GM12878 (cell line): ENCODE measurements at regions of chr2 and their contacts with region 1.

Region 1: DNA sequence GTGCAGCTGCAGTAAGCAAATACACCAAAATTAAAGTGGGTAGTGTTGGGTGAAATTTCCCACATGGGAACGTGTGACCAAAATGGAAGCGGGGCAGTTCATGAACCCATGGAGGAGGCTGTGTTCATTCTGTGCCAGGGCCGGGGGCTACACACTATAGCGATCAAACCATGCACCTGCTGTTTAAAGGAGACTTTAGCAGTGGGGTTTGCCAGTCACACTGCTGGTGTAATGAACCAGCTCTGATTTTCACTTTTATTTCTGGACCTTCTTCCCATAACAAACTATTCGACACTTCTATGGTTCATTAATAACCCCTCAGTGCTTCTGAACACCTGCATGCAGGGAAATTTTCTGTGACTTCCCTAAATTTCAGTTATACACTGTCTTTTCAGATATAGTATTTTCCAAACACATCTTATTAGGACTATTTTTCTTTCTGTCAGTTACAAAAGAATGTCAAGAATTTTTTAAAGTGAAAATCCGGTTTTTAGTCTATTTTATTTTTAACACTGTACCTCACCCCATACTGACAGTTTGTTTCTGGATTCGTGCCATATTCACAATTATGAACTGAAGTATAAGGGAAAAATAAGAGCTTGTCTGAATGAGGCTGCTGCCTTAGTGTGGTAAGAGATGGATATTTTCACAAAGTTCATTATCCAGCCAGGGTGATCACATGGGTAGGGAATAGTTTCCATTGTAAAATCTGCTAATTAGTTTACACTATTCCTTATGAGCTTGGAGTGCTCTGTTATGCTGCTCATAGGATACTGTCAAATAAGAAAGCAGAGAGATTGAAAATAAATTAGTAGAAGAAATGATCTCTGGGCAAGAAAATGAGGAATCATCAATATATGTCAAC is 111.3 kb upstream of the CAVIN2 start:
- DNase-seq: no peak
- ATAC-seq: peak; percentile 60
- H3K4me3 ChIP-seq: no peak overlapping the region
- H3K27ac ChIP-seq: no peak overlapping the region
- H3K4me1 ChIP-seq: no peaks in the 10 kb centered on the region
- H3K27me3 ChIP-seq: no peaks in the 10 kb centered on the region
- CTCF ChIP-seq: no peak
- EP300 ChIP-seq: no peak
- POLR2A ChIP-seq: no peak
- RAD21 ChIP-seq: no peak

Region 2: DNA sequence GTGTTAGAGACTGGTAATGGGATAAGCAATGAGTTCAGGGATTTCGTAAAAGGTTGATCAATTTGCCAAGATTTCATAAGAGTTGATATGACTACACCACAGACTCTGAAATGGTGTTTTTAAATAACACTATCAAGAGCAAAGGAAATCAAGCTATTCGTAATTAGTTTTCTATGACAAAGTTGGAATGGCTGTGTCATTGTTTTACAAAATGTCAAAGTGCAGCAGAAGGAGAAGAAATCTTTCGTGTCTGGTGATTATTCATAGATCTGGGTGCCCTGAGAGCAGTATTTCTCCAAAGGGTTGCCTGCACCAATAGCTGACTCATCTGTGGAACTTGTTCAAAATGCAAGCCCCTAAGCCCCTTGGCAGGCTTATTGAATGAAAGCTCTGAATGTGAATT is 210.2 kb before region 1 on chr2:
- CTCF ChIA-PET with region 1: no interaction called
- POLR2A ChIA-PET with region 1: no interaction called
- RAD21 ChIA-PET with region 1: no interaction called
- SMC1A ChIA-PET with region 1: no interaction called
- in situ Hi-C with region 1: no loop called
- intact Hi-C with region 1: no loop called
- DNase-seq: no peak
- ATAC-seq: peak; percentile 64
- H3K4me3 ChIP-seq: no peak overlapping the region
- H3K27ac ChIP-seq: no peak overlapping the region
- H3K4me1 ChIP-seq: peaks cover 10% of the 10 kb centered on the region
- H3K27me3 ChIP-seq: no peaks in the 10 kb centered on the region
- CTCF ChIP-seq: no peak
- EP300 ChIP-seq: no peak
- POLR2A ChIP-seq: no peak
- RAD21 ChIP-seq: no peak

Region 3: DNA sequence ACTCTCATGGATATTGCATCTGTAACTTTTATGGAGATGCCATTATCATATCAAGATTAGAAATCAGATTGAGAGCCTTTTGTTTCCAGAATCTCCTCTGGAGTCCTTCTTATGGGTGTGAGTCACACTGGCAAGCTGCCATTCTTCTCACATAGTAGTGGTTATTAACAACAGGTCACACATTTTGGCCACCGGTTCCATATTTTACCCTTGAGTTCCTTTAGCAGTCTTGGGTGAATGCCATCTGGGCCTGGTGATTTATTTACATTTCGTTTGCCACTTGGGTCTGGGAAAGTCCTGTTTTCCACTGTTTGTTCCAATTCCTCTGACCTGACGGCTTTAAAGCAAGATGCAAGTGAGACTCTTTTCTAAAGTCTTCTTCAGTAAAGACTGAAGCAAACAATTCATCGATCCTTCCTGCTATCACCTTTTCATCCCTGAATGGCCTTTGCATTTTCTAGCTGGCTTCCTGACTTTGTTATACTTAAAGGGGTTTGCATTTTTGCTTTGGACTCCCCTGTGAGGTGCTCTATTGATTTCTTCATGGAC is 30.8 kb before region 1 on chr2:
- CTCF ChIA-PET with region 1: no interaction called
- POLR2A ChIA-PET with region 1: no interaction called
- RAD21 ChIA-PET with region 1: interaction called, 3 read pairs
- SMC1A ChIA-PET with region 1: interaction called, 15 read pairs
- in situ Hi-C with region 1: no loop called
- intact Hi-C with region 1: no loop called
- DNase-seq: no peak
- ATAC-seq: peak; percentile 23; the same call in 1 of the 3 replicates
- H3K4me3 ChIP-seq: no peak overlapping the region
- H3K27ac ChIP-seq: no peak overlapping the region
- H3K4me1 ChIP-seq: peaks cover 23% of the 10 kb centered on the region
- H3K27me3 ChIP-seq: no peaks in the 10 kb centered on the region
- CTCF ChIP-seq: no peak
- EP300 ChIP-seq: no peak
- POLR2A ChIP-seq: no peak
- RAD21 ChIP-seq: no peak

Region 4: DNA sequence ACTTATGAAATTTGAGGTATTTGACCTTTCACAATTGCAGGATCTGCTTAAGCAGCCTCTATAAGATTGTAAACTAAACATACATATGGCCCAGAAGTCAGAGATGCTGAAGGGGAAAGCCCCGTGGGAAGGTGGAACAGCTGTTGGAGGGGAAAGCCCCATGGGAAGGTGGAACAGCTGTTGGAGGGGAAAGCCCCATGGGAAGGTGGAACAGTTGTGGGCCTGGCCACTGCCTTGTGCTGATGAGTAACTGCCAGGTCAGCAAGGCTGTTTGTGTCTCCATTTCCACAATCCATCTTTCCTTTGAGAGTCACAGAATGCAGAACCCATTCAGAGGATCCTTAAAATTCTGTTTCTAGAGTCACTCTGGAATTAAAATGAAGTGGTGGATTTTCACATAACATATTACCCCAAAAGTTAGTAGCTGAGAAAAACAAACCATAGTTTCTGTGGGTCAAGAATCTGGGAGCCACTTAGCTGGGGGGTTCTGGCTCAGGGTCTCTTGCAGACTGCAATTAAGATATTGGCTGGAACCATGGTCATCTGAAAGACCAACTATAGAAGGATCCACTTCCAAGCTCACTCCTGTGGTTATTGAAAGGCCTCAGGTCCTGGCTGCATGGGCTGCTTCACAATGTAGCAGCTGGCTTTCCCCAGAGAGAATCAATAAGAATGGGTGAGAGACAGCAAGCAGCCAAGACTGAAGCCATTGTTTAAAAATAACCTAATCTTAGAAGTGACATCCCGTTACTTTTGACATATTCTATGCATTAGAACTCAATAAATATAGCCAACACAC is 24.7 kb before region 1 on chr2:
- CTCF ChIA-PET with region 1: interaction called, 4 read pairs
- POLR2A ChIA-PET with region 1: no interaction called
- RAD21 ChIA-PET with region 1: interaction called, 3 read pairs
- SMC1A ChIA-PET with region 1: interaction called, 15 read pairs
- in situ Hi-C with region 1: no loop called
- intact Hi-C with region 1: no loop called
- DNase-seq: peak; percentile 40
- ATAC-seq: peak; percentile 88
- H3K4me3 ChIP-seq: no peak overlapping the region
- H3K27ac ChIP-seq: no peak overlapping the region; the same call in 1 of the 2 replicates
- H3K4me1 ChIP-seq: peaks cover 16% of the 10 kb centered on the region
- H3K27me3 ChIP-seq: no peaks in the 10 kb centered on the region
- CTCF ChIP-seq: no peak
- EP300 ChIP-seq: no peak
- POLR2A ChIP-seq: no peak
- RAD21 ChIP-seq: no peak

Region 5: GRCh38 chr2:192004188-192004963 is 46.1 kb after region 1 on chr2:
- CTCF ChIA-PET with region 1: interaction called, 3 read pairs
- POLR2A ChIA-PET with region 1: no interaction called
- RAD21 ChIA-PET with region 1: interaction called, 4 read pairs
- SMC1A ChIA-PET with region 1: interaction called, 4 read pairs
- in situ Hi-C with region 1: no loop called
- intact Hi-C with region 1: loop called (anchors 5 kb)
- DNase-seq: peak; percentile 40
- ATAC-seq: peak; percentile 85
- H3K4me3 ChIP-seq: peak overlapping the region; percentile 39; the same call in 1 of the 2 replicates
- H3K27ac ChIP-seq: peak overlapping the region; percentile 65
- H3K4me1 ChIP-seq: peaks cover 17% of the 10 kb centered on the region
- H3K27me3 ChIP-seq: no peaks in the 10 kb centered on the region
- CTCF ChIP-seq: no peak
- EP300 ChIP-seq: peak; percentile 70 to 83
- POLR2A ChIP-seq: no peak
- RAD21 ChIP-seq: no peak

Region 6: DNA sequence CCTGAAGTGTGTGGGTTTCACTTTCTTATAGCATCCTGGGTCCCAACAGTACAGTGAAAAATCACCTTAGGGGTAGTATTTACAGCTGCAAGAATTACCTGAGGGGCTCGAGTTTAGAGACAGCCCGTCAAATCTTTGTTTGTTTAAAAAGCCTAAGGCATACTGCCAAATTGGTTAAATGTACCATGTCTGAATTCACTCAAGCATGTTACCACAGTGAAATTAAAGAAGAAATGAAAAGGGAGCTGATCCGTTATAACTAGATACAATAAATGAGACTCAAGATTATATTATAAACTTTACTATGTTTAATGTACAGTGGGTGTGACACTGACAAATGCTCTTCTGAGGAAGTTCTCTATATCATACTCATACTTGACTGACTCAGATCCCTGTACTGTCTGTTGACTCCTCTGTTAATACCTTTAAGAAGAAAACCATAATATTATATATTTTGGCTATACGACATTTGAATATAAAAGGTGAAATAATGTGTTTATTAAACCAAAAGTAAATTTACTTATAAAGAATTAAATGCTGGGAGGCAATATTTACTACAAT is 129.2 kb after region 1 on chr2:
- CTCF ChIA-PET with region 1: no interaction called
- POLR2A ChIA-PET with region 1: no interaction called
- RAD21 ChIA-PET with region 1: no interaction called
- SMC1A ChIA-PET with region 1: no interaction called
- in situ Hi-C with region 1: no loop called
- intact Hi-C with region 1: no loop called
- DNase-seq: no peak
- ATAC-seq: peak; percentile 45; the same call in 2 of the 3 replicates
- H3K4me3 ChIP-seq: no peak overlapping the region
- H3K27ac ChIP-seq: no peak overlapping the region
- H3K4me1 ChIP-seq: no peaks in the 10 kb centered on the region
- H3K27me3 ChIP-seq: no peaks in the 10 kb centered on the region
- CTCF ChIP-seq: no peak
- EP300 ChIP-seq: no peak
- POLR2A ChIP-seq: no peak
- RAD21 ChIP-seq: no peak